AG04450 (cell line): ENCODE measurements at regions of chr4 and their contacts with region 1.

Region 1: DNA sequence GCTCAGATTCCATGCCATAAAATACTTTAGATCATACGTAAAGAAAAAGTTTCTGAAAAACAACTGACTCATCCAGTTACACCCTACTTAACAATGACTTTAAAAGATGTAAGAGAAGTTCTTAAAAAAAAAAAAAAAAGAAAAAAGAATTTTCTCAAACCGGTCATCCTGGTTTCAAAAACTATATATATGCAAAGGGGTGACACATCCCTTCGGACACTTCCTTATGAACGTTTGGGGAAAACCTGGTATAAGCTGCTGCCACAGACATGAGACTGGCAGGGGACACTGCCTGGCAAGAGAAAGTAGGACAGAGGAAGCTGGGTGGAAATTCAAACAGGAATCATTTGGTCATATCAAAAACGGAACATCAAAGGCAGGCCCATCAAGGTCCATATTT is 81.2 kb upstream of the PRSS48 start:
- DNase-seq: no peak
- H3K4me3 ChIP-seq: no peak overlapping the region
- H3K27ac ChIP-seq: peak overlapping the region; percentile 82
- H3K27me3 ChIP-seq: no peaks in the 10 kb centered on the region
- CTCF ChIP-seq: no peak

Region 2: DNA sequence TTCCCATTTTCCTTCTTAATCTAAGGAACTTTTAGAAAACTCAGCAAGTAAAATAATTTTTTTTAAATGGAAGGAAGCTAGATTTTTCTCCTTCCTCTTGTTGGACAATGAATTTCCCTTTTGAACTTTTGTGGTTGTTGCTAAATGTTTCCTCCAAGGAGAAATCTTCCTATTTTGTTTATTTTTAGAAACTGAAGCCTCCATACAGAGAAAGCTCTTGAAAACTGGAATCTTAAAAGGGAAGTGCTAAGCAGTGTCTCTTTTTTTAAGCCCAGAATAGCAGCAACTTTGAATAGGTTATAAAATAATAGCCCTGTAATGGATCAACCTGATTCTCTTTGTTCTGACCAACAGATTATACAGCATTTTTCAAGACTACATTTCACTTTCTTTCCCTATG is 1132.7 kb before region 1 on chr4:
- CTCF ChIA-PET with region 1: interaction called, 11 read pairs
- POLR2A ChIA-PET with region 1: no interaction called
- DNase-seq: no peak
- H3K4me3 ChIP-seq: no peak overlapping the region
- H3K27ac ChIP-seq: no peak overlapping the region
- H3K27me3 ChIP-seq: no peaks in the 10 kb centered on the region
- CTCF ChIP-seq: no peak

Region 3: GRCh38 chr4:151129801-151130200 is 66.0 kb before region 1 on chr4:
- CTCF ChIA-PET with region 1: no interaction called
- POLR2A ChIA-PET with region 1: no interaction called
- DNase-seq: no peak
- H3K4me3 ChIP-seq: no peak overlapping the region
- H3K27ac ChIP-seq: no peak overlapping the region
- H3K27me3 ChIP-seq: no peaks in the 10 kb centered on the region
- CTCF ChIP-seq: no peak

Region 4: GRCh38 chr4:151325111-151325948 is 129.5 kb after region 1 on chr4 and contains the start of gene SH3D19:
- CTCF ChIA-PET with region 1: no interaction called
- POLR2A ChIA-PET with region 1: no interaction called
- DNase-seq: no peak
- H3K4me3 ChIP-seq: peak within 1 kb of the TSS; percentile 67
- H3K27ac ChIP-seq: no peak within 1 kb of the TSS
- H3K27me3 ChIP-seq: no peaks in the 10 kb centered on the region
- CTCF ChIP-seq: no peak
- polyA plus RNA-seq, gene SH3D19: 30.1 and 32.6 TPM in 2 replicates